ENCODE measurements at regions of chr2 and their contacts with region 1.

Region 1: DNA sequence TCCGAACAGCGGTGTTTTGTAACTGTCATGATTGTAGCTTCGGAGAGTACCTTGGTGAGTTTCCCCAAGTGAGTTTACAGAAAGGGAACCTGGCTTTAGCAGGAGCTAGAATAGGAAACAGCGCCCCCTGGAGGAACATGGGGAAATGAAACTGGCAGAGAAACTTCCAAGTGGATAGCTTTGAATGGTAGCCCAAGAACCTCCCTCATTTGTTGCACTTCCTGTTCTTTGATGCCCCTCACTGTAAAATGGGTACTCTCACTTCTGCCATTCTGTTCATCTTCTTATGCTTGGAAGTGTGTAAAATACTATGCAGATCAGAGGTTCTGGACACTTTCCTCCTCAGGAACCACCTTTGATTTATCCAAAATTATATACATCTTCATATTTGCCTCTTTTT is 36.2 kb downstream of the CHST10 start:
- DNase-seq: peak; percentile 82
- ATAC-seq: peak; percentile 95
- H3K4me3 ChIP-seq: no peak overlapping the region
- H3K27ac ChIP-seq: peak overlapping the region; percentile 34; the same call in 1 of the 2 replicates
- H3K4me1 ChIP-seq: peaks cover 3% of the 10 kb centered on the region; the same call in 1 of the 2 replicates
- H3K27me3 ChIP-seq: no peaks in the 10 kb centered on the region
- CTCF ChIP-seq: peak; percentile 91

Region 2: DNA sequence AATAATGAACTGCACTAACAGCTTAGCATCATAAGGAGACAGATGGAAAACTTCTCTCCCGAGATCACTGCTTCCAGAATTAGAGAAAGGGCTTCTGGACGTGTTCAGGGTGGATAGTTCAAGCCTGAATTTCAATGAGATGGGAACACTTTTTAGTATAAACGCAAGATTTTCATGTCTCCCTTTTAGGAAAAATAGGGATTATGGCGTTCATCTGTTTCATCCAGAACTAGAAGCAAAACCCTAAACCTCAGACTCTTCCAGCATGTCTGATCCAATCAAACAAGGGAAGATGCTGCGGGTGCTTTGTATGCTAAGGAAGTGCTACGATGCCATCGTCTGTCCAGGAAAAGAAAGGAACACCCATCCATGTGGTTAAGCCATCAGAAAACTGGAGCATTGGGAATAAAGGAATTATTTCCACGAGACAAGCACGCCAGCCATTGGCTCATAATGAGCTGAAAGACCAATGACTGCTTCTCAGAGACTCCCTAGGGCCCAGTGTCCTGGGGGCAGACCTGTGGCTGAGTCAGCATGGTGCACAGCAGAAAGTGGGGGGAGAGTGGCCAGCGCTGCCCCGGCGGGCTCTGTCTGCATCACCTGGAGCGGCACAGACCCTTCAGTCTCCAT is 173.0 kb before region 1 on chr2:
- CTCF ChIA-PET with region 1: no interaction called
- POLR2A ChIA-PET with region 1: no interaction called
- in situ Hi-C with region 1: no loop called
- intact Hi-C with region 1: no loop called
- DNase-seq: no peak
- ATAC-seq: no peak
- H3K4me3 ChIP-seq: no peak overlapping the region
- H3K27ac ChIP-seq: no peak overlapping the region
- H3K4me1 ChIP-seq: no peaks in the 10 kb centered on the region
- H3K27me3 ChIP-seq: no peaks in the 10 kb centered on the region
- CTCF ChIP-seq: no peak

Region 3: DNA sequence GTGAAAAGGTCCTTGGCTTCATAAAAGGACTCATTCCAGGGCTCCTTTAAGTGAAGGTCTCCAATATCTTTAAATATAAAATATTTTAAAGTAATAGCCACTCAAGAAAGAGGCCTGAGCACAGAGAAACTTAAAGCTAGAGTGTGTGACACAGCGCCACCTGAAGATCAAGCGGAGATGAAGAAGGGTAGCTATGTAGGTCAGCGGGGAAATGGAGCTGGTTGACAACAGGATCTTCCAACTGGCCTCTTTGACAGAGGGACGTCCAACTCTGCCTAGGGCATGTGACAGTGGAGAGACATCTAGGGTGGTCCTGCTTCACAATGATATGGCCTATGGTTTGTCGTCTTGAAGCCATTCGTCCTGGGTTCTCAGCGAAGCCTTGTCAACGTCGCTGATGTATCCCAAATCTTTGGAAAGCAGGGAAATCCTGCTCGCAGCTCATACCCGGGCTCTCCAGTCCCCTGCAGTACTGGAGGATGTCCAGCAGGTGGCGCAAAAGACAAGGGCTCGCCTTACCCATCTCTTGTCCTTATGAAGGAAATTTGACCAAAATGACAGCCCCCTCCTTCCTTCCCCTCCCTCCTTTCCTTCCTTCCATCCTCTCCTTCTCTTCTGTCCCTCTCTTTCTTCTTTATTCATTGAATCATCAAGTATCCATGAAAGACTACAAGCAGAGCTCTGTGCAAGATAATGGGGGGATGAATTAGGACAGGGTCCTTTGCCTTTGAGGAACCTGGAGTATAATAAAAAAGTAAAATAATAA is 118.5 kb before region 1 on chr2:
- CTCF ChIA-PET with region 1: interaction called, 29 read pairs
- POLR2A ChIA-PET with region 1: no interaction called
- in situ Hi-C with region 1: no loop called
- intact Hi-C with region 1: loop called (anchors 1 kb)
- DNase-seq: peak; percentile 57
- ATAC-seq: peak; percentile 68
- H3K4me3 ChIP-seq: no peak overlapping the region
- H3K27ac ChIP-seq: no peak overlapping the region
- H3K4me1 ChIP-seq: peaks cover 7% of the 10 kb centered on the region
- H3K27me3 ChIP-seq: no peaks in the 10 kb centered on the region
- CTCF ChIP-seq: peak; percentile 96

Region 4: GRCh38 chr2:100350707-100351106 is 30.5 kb before region 1 on chr2:
- CTCF ChIA-PET with region 1: no interaction called
- POLR2A ChIA-PET with region 1: no interaction called
- in situ Hi-C with region 1: no loop called
- intact Hi-C with region 1: no loop called
- DNase-seq: no peak
- ATAC-seq: no peak
- H3K4me3 ChIP-seq: no peak overlapping the region
- H3K27ac ChIP-seq: no peak overlapping the region
- H3K4me1 ChIP-seq: no peaks in the 10 kb centered on the region
- H3K27me3 ChIP-seq: no peaks in the 10 kb centered on the region
- CTCF ChIP-seq: no peak